H1 (cell line): ENCODE measurements at regions of chr2 and their contacts with region 1.

Region 1: DNA sequence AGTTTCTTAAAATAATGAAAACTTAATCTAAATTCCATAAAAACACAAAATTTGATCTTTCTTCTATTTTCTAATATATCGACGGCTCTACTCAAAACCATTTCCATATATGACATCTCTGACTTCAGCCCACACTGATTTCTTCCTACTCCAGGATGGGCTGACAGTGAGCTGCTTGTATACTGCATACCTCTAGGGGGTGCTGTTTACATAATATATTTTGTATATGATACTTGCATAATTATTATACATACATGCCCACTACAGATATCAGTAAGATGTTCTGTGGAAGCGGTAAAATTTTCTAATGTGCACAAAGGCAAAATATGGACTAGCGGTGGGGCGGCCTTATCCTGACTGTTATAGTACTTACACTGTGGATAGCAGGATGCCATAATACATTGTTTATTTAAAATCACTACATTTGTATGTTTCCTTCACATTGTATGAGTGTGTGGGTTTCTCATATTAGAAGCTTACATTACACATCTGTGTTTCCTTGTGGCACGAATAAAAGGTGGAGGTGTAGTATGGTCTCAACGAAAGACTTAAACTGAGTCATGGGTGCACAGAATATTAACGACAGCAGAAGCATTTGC is 66.1 kb upstream of the NXPH2 start:
- DNase-seq: no peak
- H3K4me3 ChIP-seq: no peak overlapping the region
- H3K27ac ChIP-seq: no peak overlapping the region
- H3K4me1 ChIP-seq: no peaks in the 10 kb centered on the region
- H3K27me3 ChIP-seq: no peaks in the 10 kb centered on the region
- CTCF ChIP-seq: peak in 2 of 3 experiments; percentile 35 to 61; a peak in 2 of 4 replicates
- EP300 ChIP-seq: no peak
- POLR2A ChIP-seq: no peak
- RAD21 ChIP-seq: peak; percentile 50 to 61

Region 2: GRCh38 chr2:138689705-138690104 is 156.6 kb before region 1 on chr2:
- CTCF ChIA-PET with region 1: no interaction called
- POLR2A ChIA-PET with region 1: no interaction called
- DNase-seq: no peak
- H3K4me3 ChIP-seq: no peak overlapping the region
- H3K27ac ChIP-seq: no peak overlapping the region
- H3K4me1 ChIP-seq: no peaks in the 10 kb centered on the region
- H3K27me3 ChIP-seq: no peaks in the 10 kb centered on the region
- CTCF ChIP-seq: no peak
- EP300 ChIP-seq: no peak
- POLR2A ChIP-seq: no peak
- RAD21 ChIP-seq: no peak

Region 3: GRCh38 chr2:138866797-138867196 is 20.5 kb after region 1 on chr2:
- CTCF ChIA-PET with region 1: interaction called, 11 read pairs
- POLR2A ChIA-PET with region 1: no interaction called
- DNase-seq: no peak
- H3K4me3 ChIP-seq: no peak overlapping the region
- H3K27ac ChIP-seq: no peak overlapping the region
- H3K4me1 ChIP-seq: no peaks in the 10 kb centered on the region
- H3K27me3 ChIP-seq: no peaks in the 10 kb centered on the region
- CTCF ChIP-seq: no peak
- EP300 ChIP-seq: no peak
- POLR2A ChIP-seq: no peak
- RAD21 ChIP-seq: no peak